ENCODE measurements at regions of chr10 and their contacts with region 1.

Region 1: GRCh38 chr10:7410862-7411670 is at the start of gene SFMBT2:
- DNase-seq: peak; percentile 79
- H3K4me3 Mint-ChIP-seq: peak within 1 kb of the TSS; percentile 90
- H3K27ac Mint-ChIP-seq: peak within 1 kb of the TSS; percentile 92
- H3K4me1 Mint-ChIP-seq: peaks cover 51% of the 10 kb centered on the region
- H3K27me3 Mint-ChIP-seq: peaks cover 31% of the 10 kb centered on the region

Region 2: GRCh38 chr10:7121154-7121810 is 289.8 kb before region 1 on chr10:
- CTCF ChIA-PET with region 1: interaction called, 17 read pairs
- DNase-seq: peak; percentile 83
- H3K4me3 Mint-ChIP-seq: no peak overlapping the region
- H3K27ac Mint-ChIP-seq: no peak overlapping the region
- H3K4me1 Mint-ChIP-seq: peaks cover 4% of the 10 kb centered on the region
- H3K27me3 Mint-ChIP-seq: peaks cover 35% of the 10 kb centered on the region

Region 3: DNA sequence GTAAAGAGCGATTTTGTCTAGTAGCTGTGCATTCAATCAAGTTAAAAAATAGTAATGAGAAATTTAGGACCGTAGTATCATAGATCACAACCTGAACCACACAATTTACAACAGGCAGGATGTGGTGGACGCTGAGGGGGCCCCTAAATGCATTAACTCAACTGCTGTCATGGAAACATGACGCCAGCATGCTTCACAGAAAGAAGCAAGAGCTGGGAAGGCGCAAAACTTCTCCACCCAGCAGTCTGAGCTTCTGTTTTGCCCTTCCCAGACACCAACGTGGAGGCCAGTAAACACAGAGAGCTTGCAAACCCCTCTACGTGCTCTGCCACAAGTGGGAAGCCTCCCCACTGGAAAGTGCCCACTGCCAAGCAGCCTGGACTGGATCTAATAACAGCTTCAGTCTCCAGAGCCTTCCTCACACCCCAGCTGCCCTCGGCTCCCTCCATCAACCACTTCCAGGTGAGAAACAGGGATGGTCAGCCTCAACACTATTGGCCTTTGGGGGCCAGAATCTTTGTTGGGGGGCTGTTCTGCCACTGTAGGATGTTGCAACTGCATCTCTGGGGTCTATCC is 152.0 kb before region 1 on chr10:
- CTCF ChIA-PET with region 1: interaction called, 10 read pairs
- DNase-seq: peak; percentile 78
- H3K4me3 Mint-ChIP-seq: peak overlapping the region; percentile 20
- H3K27ac Mint-ChIP-seq: peak overlapping the region; percentile 67
- H3K4me1 Mint-ChIP-seq: peaks cover 66% of the 10 kb centered on the region
- H3K27me3 Mint-ChIP-seq: no peaks in the 10 kb centered on the region

Region 4: GRCh38 chr10:7397049-7398035 is 13.7 kb before region 1 on chr10:
- CTCF ChIA-PET with region 1: no interaction called
- DNase-seq: no peak
- H3K4me3 Mint-ChIP-seq: no peak overlapping the region
- H3K27ac Mint-ChIP-seq: no peak overlapping the region
- H3K4me1 Mint-ChIP-seq: peaks cover 33% of the 10 kb centered on the region
- H3K27me3 Mint-ChIP-seq: no peaks in the 10 kb centered on the region

Region 5: DNA sequence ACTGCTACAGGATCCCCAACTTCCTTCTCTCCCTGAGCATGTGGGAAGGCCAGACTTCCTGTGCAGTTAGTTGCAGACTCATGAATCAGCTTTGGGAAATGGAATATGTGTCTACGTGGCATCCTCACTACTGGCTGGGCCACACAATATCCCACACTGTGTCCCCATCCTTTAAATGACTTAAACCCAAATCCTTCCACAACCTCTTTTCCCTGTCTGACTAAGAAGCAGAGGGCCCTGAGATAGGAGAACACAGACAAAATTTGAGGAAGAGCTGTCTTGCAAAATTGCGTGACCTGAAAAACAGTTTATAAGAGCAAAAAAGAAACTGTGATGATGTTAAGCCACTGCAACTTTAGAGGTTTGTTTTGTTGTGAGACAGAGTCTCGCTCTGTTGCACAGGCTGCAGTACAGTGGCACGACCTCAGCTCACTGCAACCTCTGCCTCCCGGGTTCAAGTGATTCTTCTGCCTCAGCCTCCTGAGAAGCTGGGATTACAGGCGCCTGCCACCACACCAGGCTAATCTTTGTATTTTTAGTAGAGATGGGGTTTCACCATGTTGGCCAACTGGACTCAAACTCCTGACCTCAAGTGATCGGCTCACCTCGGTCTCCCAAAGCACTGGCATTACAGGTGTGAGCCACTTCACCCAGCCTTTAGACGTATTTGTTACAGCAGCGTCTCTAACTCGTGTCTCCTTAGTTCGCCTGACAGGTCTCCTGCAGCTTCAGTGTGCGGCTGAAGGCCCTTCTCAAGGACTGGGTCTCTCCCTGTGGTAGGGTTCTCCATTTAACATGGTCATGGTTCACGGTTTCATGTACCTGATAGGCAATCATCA is 46.6 kb after region 1 on chr10:
- CTCF ChIA-PET with region 1: no interaction called
- DNase-seq: no peak
- H3K4me3 Mint-ChIP-seq: no peak overlapping the region
- H3K27ac Mint-ChIP-seq: no peak overlapping the region
- H3K4me1 Mint-ChIP-seq: no peaks in the 10 kb centered on the region
- H3K27me3 Mint-ChIP-seq: peaks cover 5% of the 10 kb centered on the region

Region 6: GRCh38 chr10:7583626-7584025 is 172.6 kb after region 1 on chr10:
- CTCF ChIA-PET with region 1: no interaction called
- DNase-seq: no peak
- H3K4me3 Mint-ChIP-seq: no peak overlapping the region
- H3K27ac Mint-ChIP-seq: no peak overlapping the region
- H3K4me1 Mint-ChIP-seq: peaks cover 9% of the 10 kb centered on the region
- H3K27me3 Mint-ChIP-seq: peaks cover 42% of the 10 kb centered on the region